HepG2 (cell line): ENCODE measurements at regions of chr2 and their contacts with region 1.

Region 1: GRCh38 chr2:168956392-168956791 is 55.3 kb downstream of the G6PC2 start:
- DNase-seq: no peak
- ATAC-seq: no peak
- H3K4me3 ChIP-seq: no peak overlapping the region
- H3K27ac ChIP-seq: no peak overlapping the region
- H3K4me1 ChIP-seq: no peaks in the 10 kb centered on the region
- H3K27me3 ChIP-seq: no peaks in the 10 kb centered on the region
- CTCF ChIP-seq: no peak
- EP300 ChIP-seq: no peak
- POLR2A ChIP-seq: no peak
- RAD21 ChIP-seq: no peak

Region 2: GRCh38 chr2:169221745-169222369 is 265.5 kb after region 1 on chr2:
- CTCF ChIA-PET with region 1: no interaction called
- POLR2A ChIA-PET with region 1: no interaction called
- in situ Hi-C with region 1: no loop called
- intact Hi-C with region 1: loop called (anchors 10 kb)
- DNase-seq: no peak
- ATAC-seq: peak; percentile 63
- H3K4me3 ChIP-seq: no peak overlapping the region
- H3K27ac ChIP-seq: no peak overlapping the region
- H3K4me1 ChIP-seq: no peaks in the 10 kb centered on the region
- H3K27me3 ChIP-seq: no peaks in the 10 kb centered on the region
- CTCF ChIP-seq: peak; percentile 21
- EP300 ChIP-seq: no peak
- POLR2A ChIP-seq: no peak
- RAD21 ChIP-seq: no peak